ENCODE measurements at regions of chr14 and their contacts with region 1.

Region 1: DNA sequence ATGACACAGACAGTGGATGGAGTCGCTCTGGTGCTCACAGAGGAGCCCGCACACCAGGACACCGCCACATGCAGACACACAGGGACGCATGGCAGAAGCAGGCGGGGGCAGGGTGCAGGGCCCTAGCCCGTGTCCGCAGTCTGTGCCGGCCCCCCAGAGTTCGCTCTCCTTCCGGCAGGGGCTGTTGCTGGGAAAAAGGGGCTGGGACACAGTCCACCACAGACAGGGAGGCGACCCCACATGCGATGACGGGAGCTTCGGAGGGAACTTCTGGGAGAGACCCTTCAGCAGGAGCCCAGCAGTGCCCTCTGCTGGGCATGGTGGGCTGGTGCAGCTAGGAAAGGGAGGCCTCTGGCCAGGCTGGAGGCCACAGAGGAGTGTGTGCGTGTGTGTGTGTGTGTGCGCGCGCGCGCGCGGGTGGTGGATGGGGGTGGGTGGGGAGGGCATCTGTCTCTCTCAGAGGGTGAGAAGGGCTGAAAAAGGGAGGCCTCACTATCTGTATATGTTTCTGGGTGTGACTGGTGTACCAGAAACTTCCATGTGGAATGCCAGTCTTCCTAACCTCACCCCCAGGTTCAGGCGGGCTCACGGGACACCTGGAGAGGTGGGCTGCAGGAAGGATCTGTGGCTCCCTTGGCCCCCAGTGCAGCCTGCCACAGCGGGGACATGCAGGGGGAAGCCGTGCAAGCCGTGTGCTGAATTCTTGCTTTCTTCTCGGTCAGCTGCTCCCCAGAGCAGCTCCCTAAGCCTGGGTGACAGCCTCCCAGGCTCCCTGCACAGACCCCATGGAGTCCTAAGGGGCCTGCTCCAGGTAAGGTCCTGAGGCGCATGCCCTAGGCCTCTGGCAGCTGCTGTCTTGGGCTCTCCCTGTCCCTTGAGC is 60.7 kb downstream of the PLEKHG3 start:
- DNase-seq: peak; percentile 53
- H3K4me3 Mint-ChIP-seq: peak overlapping the region; percentile 10
- H3K27ac Mint-ChIP-seq: no peak overlapping the region
- H3K4me1 Mint-ChIP-seq: peaks cover 14% of the 10 kb centered on the region
- H3K27me3 Mint-ChIP-seq: peaks cover 16% of the 10 kb centered on the region

Region 2: DNA sequence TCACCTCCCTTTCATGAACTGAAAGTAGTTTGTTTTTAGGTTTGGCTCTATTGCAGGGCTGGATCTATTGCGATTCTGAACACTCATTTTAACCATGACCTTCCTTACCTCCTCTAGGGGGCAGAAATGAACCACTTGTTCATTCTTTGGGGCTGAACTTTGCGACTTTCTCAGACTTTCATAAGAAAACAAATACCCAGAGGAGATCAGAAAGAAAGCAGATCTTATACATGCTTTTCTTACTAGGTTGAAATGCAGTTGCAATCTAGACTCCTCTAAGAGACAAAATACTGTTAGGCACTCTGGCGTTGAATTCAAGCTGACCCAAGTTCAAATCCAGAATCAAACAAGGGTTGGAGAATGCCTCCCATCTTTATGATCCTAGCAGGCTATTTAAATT is 93.3 kb before region 1 on chr14:
- intact Hi-C with region 1: loop called (anchors 1 kb)
- DNase-seq: no peak
- H3K4me3 Mint-ChIP-seq: no peak overlapping the region
- H3K27ac Mint-ChIP-seq: no peak overlapping the region
- H3K4me1 Mint-ChIP-seq: peaks cover 29% of the 10 kb centered on the region
- H3K27me3 Mint-ChIP-seq: peaks cover 4% of the 10 kb centered on the region

Measured in activated T-helper 2 cell treated with anti-CD3 and anti-CD28 coated beads, Interferon-gamma antibody, Interleukin-2, Interleukin-4, amounts not matched to agents 10 μg/mL and 5 μg/mL and 100 μg/mL, durations not matched to agents 14 hours and 24 hours and 36 hours (primary cell).